Head of caudate nucleus (tissue), 42 donors: ENCODE measurements at regions of chr19 and their contacts with region 1.

Region 1: DNA sequence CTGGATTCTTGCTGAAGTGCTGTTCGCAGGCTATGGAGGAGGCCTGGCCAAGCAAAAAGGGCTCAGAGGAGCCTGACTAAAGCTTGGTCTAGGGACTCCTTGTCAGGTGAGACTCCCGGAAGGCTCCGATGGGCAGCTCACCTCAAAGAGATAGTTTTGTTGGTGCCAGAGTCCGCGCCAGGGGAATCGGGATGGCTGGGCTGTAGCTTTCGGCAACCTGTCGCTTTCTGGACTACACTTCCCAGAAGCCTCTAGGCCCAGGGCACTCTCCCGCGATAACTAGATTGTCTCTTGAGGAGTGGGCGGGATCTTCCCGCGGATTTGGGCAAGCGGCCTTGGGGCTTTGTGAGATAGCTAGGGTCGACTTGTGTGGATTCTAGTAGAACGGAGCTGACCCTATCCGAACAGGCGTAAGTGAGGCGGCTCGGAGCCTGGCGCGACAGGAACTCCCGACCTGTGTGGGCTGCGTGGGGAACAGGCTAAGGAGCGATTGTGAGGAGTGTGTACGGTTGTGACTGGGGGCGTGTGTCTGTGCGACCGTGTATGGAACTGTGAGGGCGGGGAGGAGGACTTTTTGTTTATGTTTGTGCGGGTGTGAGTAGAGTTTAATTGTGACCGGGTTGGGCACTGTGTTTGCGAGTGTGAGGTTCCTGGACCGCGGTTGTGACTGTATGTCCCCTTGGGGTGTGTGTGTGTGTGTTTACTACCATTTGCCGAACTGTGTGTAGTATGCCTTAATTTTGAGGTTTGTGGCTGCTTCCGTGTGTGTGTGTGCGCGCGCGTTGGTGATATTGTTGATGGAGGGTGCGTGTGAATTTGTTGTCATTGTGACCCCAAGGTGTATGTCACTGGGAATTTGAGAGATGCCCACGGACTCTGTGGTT is at the start of gene ZNF345:
- DNase-seq: peak; percentile 83 to 98 (median 94)

Region 2: GRCh38 chr19:36638862-36639510 is 211.8 kb before region 1 on chr19:
- intact Hi-C with region 1: no loop called
- DNase-seq: no peak

Region 3: DNA sequence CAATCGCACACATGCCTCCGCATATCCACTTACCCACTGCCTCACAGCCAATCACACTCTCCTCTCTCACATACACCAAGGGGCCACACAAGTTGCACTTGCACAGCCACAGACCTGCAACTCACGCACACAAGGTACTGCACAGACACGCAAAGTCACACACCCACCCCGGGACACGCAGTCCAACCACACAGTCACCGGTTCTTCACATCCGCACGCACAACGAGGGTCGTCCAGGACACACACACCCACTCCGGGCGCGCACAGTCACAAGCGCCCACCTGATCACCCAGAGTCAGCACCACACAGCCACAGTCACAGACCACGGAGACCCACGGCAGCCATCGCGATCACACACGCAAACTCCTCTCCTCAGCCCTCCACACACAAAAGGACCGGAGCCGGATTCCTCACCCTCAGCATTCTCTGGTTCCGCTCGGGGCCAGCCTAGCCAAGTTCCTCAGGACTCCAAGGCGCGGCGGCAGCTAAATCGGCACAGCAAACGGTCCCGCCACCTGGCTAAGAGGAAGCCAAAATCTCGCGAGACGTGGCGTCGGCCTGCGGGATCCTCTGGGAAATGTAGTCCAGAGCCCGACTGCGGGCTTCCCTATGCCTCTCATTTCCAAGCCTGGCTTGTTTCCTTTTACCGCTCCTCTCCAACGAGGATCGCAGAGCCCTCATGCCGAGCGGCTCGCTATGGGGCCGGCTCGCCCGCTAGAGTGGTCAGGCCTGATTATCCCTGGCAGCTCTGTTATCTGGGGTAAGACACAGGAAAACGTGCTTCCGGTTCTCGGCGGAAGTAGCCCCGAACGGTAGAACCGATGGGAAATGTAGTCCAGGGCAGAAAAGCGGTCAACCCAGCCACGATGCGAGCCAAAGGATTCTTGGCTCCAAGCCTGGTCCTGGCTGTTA is 78.2 kb before region 1 on chr19 and contains the start of gene ZNF850:
- intact Hi-C with region 1: loop called (anchors 2 kb)
- DNase-seq: peak; percentile 91 to 98 (median 95)

Region 4: DNA sequence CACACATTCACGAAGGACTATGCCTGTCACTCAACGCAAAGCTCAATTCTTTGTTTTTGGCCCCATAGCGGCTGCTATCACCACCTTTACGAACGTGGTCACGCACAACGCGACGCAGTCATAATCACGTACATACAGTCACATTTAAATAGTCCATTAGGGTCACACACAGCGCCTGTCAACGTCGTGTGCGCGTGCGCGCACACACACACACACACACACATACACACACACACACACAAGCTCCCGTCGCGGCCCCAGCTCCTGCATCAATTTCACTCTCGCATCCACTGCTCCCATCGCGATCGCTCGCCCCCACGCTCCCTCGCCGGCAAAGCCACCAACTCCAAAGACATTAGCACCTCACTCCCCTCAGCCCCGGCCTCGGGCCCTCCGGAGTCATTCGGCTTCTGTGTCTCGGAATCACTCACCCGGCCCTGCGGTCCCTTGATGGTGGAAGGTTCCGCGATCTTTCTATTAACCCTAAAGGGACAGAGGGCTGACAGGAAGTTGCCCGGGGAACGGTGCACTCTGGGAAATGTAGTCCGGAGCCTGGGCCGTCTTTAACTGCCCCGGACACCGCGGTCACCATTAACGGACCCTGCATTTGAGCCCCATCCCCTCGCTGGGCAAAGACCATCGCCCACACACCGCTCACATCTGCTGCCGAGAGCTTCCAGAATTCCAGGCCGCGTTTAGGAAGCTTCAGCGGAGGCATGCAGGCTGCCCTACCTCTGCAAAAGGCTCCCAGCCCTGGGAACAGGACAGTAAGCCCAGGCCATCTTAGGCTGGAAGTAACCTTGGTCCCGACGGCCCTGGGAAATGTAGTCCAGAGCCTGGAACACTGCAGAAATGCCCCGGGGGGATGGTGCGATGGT is 12.7 kb before region 1 on chr19 and contains the start of gene ZNF790:
- intact Hi-C with region 1: loop called (anchors 1 kb)
- DNase-seq: peak; percentile 85 to 97 (median 93)

Region 5: GRCh38 chr19:36891768-36892357 is 41.1 kb after region 1 on chr19:
- intact Hi-C with region 1: no loop called
- DNase-seq: no peak

Region 6: DNA sequence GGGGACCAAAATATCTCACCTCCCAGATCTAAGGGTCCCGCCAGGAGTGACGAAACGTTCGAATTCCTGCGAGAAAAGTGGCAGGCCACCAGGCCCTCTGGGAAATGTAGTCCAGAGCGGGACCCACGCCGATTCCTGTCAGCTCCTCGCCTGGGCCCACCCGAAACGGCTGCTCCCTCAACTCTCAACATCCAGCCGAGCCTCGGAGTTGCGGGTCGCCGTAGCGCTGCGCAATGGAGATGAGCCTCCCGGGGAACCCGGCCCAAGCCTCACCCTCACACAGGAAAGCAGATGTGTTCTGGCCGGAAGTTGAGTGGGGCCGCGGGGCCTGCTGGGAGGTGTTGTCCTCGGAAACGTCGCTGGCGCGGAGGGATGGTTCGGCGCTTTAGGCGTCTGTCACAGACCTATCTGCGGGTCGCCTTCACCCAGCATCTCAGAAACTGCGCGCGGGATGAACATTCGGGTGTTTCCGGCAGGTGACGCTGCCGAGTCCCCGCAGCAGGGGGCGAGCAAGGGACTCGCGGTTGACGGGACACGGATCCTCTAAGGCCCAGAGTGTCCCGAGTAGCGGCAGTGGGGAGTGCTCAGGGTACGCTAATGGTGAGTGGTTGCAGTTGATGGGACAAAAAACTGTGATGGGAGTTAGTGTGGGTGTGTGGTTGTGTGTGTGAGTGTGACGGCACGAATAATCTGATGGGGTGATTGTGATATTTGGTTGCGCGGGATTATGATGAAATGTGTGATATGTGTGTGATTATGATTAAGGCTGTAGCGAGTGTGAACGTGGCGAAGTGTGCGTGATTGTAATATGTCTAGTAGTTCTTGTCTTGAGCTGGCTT is 65.4 kb after region 1 on chr19 and contains the starts of genes ZNF568 and ZNF829:
- intact Hi-C with region 1: loop called (anchors 5 kb)
- DNase-seq: peak; percentile 88 to 97 (median 94)